ENCODE measurements at regions of chr3 and their contacts with region 1.

Region 1: DNA sequence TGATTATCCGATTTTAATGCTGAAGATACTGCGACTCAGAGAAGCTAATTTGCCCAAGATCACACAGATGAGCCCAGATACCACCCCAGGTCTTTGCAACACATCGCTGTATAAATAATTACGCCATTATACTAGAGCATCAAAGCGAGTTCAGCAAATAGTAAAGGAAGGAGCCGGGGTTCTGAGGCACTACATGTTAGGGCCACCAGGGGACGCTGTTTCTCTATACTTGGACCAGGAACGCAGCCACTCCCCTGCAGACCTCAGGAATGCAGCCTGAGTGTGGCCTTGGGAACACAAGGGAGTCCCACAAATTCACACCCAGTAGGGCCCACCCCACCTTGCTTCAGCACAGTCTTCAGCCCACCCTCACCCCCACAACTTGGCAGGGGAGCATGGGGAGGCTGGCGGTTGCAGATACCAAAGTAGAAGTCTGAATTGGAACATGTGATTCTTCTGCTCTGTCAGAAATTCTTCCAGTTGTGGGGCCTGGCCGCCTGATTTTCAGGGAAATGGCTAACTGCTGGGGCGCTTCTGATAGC is 57.8 kb upstream of the RYK start:
- DNase-seq: no peak
- H3K4me3 ChIP-seq: peak overlapping the region; percentile 33
- CTCF ChIP-seq: peak; percentile 93

Region 2: DNA sequence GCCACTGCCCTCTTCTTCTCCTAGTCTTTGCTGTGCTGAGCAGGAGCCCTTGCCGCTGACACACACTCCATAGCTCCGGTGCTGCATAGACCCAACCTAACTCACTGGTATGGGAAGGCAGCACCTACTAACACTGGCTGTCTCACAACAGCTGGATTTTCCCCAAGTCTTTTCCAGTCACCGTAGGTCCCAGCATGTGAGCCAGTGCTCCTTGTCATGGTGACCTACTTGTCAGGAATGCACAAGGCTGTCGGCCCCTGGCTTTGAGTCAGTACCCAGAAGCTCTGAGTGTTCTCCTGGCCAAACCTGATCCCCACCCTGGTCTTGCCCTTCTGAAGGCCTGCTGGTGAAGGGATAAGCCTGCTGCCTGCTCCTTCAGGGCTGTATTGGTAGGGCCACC is 40.1 kb after region 1 on chr3:
- CTCF ChIA-PET with region 1: interaction called, 23 read pairs
- POLR2A ChIA-PET with region 1: interaction called, 5 read pairs
- DNase-seq: no peak
- H3K4me3 ChIP-seq: no peak overlapping the region
- CTCF ChIP-seq: no peak

Region 3: DNA sequence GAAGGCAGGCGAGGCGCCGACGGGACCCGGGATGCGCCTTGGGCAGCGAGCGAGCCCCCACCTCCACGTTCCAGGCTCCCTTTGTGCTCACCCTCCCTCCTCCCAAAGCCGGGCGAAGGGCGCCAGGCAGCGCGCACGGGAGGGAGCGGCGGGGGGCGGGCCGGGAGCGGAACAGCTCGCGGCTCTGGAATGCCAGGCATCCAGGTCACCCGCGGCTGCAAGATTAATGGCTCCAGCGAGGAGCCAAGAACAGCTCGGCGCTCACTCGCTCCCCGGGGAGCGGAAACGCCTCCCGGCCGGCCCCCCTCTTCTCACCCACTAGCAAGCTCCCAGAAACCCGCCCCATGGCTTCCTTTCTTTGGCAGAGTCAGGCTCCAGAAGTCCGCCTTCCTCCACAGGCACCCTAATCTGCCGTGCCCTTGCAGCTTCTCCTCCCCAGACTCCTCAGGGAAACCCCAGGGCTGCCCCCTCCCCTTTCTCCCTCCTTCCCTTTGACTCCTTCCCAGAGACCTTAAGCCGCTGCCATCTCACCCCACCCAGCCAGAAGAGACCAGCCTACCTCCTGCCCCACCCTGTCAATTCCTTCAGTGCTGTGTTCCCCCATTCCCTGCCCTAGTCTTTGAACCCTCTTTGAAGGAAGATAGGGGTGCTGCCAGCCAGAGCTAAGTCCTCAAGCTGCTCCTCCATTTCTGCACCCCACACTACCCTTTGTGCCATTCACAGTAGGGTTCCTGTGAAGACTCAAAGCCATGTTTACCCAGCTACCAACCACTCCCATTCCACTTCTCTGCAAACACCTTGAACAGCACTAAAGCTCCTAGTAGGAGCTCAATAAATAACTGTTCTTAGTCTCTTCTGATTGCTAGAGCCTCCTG is 55.9 kb after region 1 on chr3:
- CTCF ChIA-PET with region 1: interaction called, 65 read pairs
- POLR2A ChIA-PET with region 1: interaction called, 17 read pairs
- DNase-seq: peak; percentile 95
- H3K4me3 ChIP-seq: peak overlapping the region; percentile 42
- CTCF ChIP-seq: no peak

Region 4: GRCh38 chr3:134464064-134464697 is 155.8 kb after region 1 on chr3:
- CTCF ChIA-PET with region 1: interaction called, 23 read pairs
- POLR2A ChIA-PET with region 1: no interaction called
- DNase-seq: peak; percentile 100
- H3K4me3 ChIP-seq: no peak overlapping the region
- CTCF ChIP-seq: no peak

Region 5: GRCh38 chr3:134496471-134497071 is 188.2 kb after region 1 on chr3:
- CTCF ChIA-PET with region 1: interaction called, 83 read pairs
- POLR2A ChIA-PET with region 1: no interaction called
- DNase-seq: no peak
- H3K4me3 ChIP-seq: no peak overlapping the region
- CTCF ChIP-seq: no peak

Measured in AG04449 (cell line).